Left ventricle myocardium superior (tissue), 1 donor: ENCODE measurements at regions of chr3 and their contacts with region 1.

Region 1: GRCh38 chr3:14678015-14678503 is 3.1 kb downstream of the C3orf20 start:
- DNase-seq: no peak
- ATAC-seq: no peak

Region 2: GRCh38 chr3:14461748-14462324 is 216.2 kb before region 1 on chr3:
- intact Hi-C with region 1: no loop called
- DNase-seq: peak; percentile 72
- ATAC-seq: peak; percentile 71

Region 3: GRCh38 chr3:14744556-14744955 is 66.5 kb after region 1 on chr3:
- intact Hi-C with region 1: no loop called
- DNase-seq: no peak
- ATAC-seq: no peak

Region 4: GRCh38 chr3:14761118-14761672 is 83.1 kb after region 1 on chr3:
- intact Hi-C with region 1: no loop called
- DNase-seq: no peak
- ATAC-seq: no peak

Region 5: GRCh38 chr3:14857506-14857905 is 179.4 kb after region 1 on chr3:
- intact Hi-C with region 1: no loop called
- DNase-seq: no peak
- ATAC-seq: no peak

Region 6: DNA sequence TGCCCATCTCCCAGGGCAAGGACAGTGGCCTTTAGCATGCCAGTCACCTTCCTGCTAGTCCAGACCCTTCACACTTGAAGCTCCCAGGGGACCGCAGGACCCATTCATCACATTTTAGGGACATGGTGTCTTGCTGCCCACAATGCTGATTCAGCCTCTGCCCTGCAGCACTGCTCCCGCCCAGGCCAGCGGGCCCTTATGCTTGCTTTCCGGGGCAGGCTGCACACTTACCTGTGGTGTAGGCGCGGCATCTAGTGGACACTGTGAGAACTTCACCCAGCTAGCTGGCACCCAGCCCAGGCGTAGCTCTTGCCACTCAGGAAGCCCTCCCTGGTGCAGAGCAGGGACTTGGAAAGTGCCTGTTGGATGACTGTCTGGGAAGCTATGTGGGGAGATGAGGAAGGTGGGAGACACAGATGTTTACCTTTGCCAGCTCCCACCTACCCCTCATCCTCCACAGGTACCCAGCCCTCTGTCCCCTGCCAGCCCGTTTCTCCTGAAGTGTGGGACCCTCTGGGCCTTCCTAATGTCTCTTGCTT is 243.1 kb after region 1 on chr3:
- intact Hi-C with region 1: loop called (anchors 5 kb)
- DNase-seq: peak; percentile 94
- ATAC-seq: peak; percentile 94